Thyroid gland (tissue), 4 donors: ENCODE measurements at regions of chr5 and their contacts with region 1.

Region 1: GRCh38 chr5:1004461-1005248 is 3.9 kb upstream of the NKD2 start:
- DNase-seq: peak; percentile 70 to 71
- H3K4me3 ChIP-seq: peak overlapping the region in 1 of 3 donors; percentile 65
- H3K27ac ChIP-seq: peak overlapping the region in 2 of 3 donors; percentile 29 to 82
- H3K4me1 ChIP-seq: peaks cover 7 to 30% of the 10 kb centered on the region in 2 donors
- H3K27me3 ChIP-seq: peaks cover 5% of the 10 kb centered on the region
- CTCF ChIP-seq: peak in 3 of 6 experiments; percentile 16 to 39 (median 28)
- POLR2A ChIP-seq: no peak

Region 2: GRCh38 chr5:1125030-1125357 is 120.3 kb after region 1 on chr5:
- intact Hi-C with region 1: no loop called
- DNase-seq: no peak
- H3K4me3 ChIP-seq: no peak overlapping the region
- H3K27ac ChIP-seq: no peak overlapping the region
- H3K4me1 ChIP-seq: peaks cover 10 to 20% of the 10 kb centered on the region in 2 donors
- H3K27me3 ChIP-seq: no peaks in the 10 kb centered on the region
- CTCF ChIP-seq: no peak
- POLR2A ChIP-seq: no peak

Region 3: DNA sequence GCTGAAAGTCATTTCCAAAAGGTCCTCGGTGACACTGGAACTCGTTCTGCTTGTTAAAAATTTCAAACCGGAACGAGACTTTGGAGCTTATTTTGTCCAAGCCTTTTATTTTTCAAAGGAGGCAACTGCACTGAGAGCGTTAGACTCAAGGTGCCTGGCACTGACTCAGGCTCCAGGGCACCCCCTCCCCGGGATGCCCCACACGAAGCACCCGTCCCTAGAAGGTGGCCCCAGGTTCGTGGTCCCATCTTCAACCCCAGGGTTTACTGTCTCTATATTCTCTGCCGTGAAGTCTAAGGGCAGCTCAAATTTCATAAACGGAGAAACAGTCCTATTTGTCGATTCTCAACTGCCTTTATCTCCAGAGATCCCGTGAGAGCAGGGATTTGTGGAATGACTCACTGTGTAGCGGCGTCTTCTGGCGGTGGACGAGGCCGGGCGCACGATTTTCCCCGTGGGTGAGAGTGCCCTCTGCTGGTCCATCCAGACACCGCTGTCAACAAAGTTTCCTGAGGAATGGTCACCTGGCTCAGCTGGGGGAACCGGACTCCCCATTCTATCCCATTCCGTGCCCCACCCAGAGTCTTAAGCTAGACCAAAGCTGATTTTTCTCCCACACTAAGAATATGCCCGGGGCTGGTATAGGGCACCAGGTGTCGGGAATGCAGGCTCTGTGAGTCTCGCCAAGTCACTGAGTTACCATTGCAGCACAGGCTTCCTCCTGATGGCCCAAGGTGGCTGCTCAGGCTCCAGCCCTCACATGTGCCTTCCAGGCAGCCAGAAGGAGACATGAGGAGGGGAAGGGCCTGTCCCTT is 169.7 kb after region 1 on chr5:
- intact Hi-C with region 1: loop called (anchors 10 kb)
- DNase-seq: peak; percentile 63 to 74
- H3K4me3 ChIP-seq: no peak overlapping the region
- H3K27ac ChIP-seq: no peak overlapping the region
- H3K4me1 ChIP-seq: peaks cover under 1 to 8% of the 10 kb centered on the region in 2 donors
- H3K27me3 ChIP-seq: no peaks in the 10 kb centered on the region
- CTCF ChIP-seq: peak; percentile 47 to 82 (median 76)
- POLR2A ChIP-seq: no peak

Region 4: GRCh38 chr5:1641560-1642166 is 637.0 kb after region 1 on chr5:
- intact Hi-C with region 1: loop called (anchors 5 kb)
- DNase-seq: peak; percentile 86 to 90
- H3K4me3 ChIP-seq: no peak overlapping the region
- H3K27ac ChIP-seq: no peak overlapping the region
- H3K4me1 ChIP-seq: peaks cover 0 to 6% of the 10 kb centered on the region in 2 donors
- H3K27me3 ChIP-seq: peaks cover 10% of the 10 kb centered on the region
- CTCF ChIP-seq: peak; percentile 67 to 93 (median 85)
- POLR2A ChIP-seq: no peak